Naive thymus-derived CD4-positive, alpha-beta T cell (primary cell): ENCODE measurements at regions of chr21 and their contacts with region 1.

Region 1: GRCh38 chr21:25487046-25487594 is 120.2 kb downstream of the MRPL39 start:
- DNase-seq: no peak
- ATAC-seq: peak; percentile 27
- H3K4me3 ChIP-seq: no peak overlapping the region
- H3K4me3 Mint-ChIP-seq: no peak overlapping the region
- H3K27ac ChIP-seq: no peak overlapping the region
- H3K27ac Mint-ChIP-seq: peak overlapping the region in 1 of 9 donors; percentile 53
- H3K4me1 ChIP-seq: no peaks in the 10 kb centered on the region
- H3K4me1 Mint-ChIP-seq: peaks cover 0 to 43% (median 0%) of the 10 kb centered on the region in 7 donors
- H3K27me3 ChIP-seq: no peaks in the 10 kb centered on the region
- H3K27me3 Mint-ChIP-seq: no peaks in the 10 kb centered on the region

Region 2: GRCh38 chr21:25421327-25422028 is 65.6 kb before region 1 on chr21:
- CTCF ChIA-PET with region 1: no interaction called
- POLR2A ChIA-PET with region 1: no interaction called
- intact Hi-C with region 1: no loop called
- DNase-seq: peak in 8 of 9 donors; percentile 18 to 50 (median 40)
- ATAC-seq: peak; percentile 91
- H3K4me3 ChIP-seq: no peak overlapping the region
- H3K4me3 Mint-ChIP-seq: peak overlapping the region in 6 of 10 donors; percentile 7 to 88 (median 56)
- H3K27ac ChIP-seq: no peak overlapping the region
- H3K27ac Mint-ChIP-seq: peak overlapping the region in 7 of 9 donors; percentile 1 to 84 (median 41)
- H3K4me1 ChIP-seq: peaks cover 6 to 7% of the 10 kb centered on the region in 2 donors
- H3K4me1 Mint-ChIP-seq: peaks cover 4 to 25% (median 12%) of the 10 kb centered on the region in 7 donors
- H3K27me3 ChIP-seq: no peaks in the 10 kb centered on the region
- H3K27me3 Mint-ChIP-seq: peaks cover 0 to 6% (median 0%) of the 10 kb centered on the region in 5 donors

Region 3: GRCh38 chr21:25457411-25457810 is 29.7 kb before region 1 on chr21:
- CTCF ChIA-PET with region 1: no interaction called
- POLR2A ChIA-PET with region 1: no interaction called
- intact Hi-C with region 1: loop called in 1 of 2 experiments (anchors 1 kb)
- DNase-seq: peak in 6 of 9 donors; percentile 11 to 49 (median 34)
- ATAC-seq: peak; percentile 95
- H3K4me3 ChIP-seq: peak overlapping the region; percentile 1
- H3K4me3 Mint-ChIP-seq: peak overlapping the region; percentile 65 to 91 (median 82)
- H3K27ac ChIP-seq: peak overlapping the region; percentile 40
- H3K27ac Mint-ChIP-seq: peak overlapping the region; percentile 81 to 91 (median 86)
- H3K4me1 ChIP-seq: peaks cover 0 to 5% of the 10 kb centered on the region in 2 donors
- H3K4me1 Mint-ChIP-seq: peaks cover 5 to 39% (median 24%) of the 10 kb centered on the region in 7 donors
- H3K27me3 ChIP-seq: no peaks in the 10 kb centered on the region
- H3K27me3 Mint-ChIP-seq: no peaks in the 10 kb centered on the region

Region 4: GRCh38 chr21:25464275-25464674 is 22.8 kb before region 1 on chr21:
- CTCF ChIA-PET with region 1: no interaction called
- POLR2A ChIA-PET with region 1: no interaction called
- intact Hi-C with region 1: loop called in 1 of 2 experiments (anchors 1 kb)
- DNase-seq: no peak
- ATAC-seq: peak; percentile 75
- H3K4me3 ChIP-seq: no peak overlapping the region
- H3K4me3 Mint-ChIP-seq: peak overlapping the region in 1 of 10 donors; percentile 8
- H3K27ac ChIP-seq: no peak overlapping the region
- H3K27ac Mint-ChIP-seq: peak overlapping the region in 2 of 9 donors; percentile 13 to 83
- H3K4me1 ChIP-seq: no peaks in the 10 kb centered on the region
- H3K4me1 Mint-ChIP-seq: peaks cover 0 to 47% (median 8%) of the 10 kb centered on the region in 7 donors
- H3K27me3 ChIP-seq: no peaks in the 10 kb centered on the region
- H3K27me3 Mint-ChIP-seq: no peaks in the 10 kb centered on the region